ENCODE measurements at regions of chr18 and their contacts with region 1.

Region 1: DNA sequence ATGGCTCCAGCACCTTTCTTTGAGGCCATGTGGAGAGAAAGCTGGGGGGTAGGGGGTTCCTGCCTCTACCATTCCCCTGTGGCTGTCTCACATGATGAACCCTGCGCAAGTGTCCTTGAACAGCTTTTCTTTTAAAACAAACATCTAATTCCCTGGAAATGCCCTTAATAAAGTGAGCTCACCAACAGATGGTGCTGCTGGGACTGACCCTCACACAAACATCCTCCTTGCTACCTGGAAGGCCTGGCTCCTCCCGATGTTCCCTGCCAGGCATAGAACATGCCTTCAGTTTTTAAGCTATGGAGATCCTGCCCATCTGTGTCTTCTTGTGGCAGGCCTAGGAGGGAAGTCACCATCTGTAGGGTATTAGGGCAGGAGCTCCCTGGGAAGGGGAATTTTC is 60.7 kb upstream of the GATA6 start:
- DNase-seq: no peak
- H3K4me3 ChIP-seq: no peak overlapping the region
- H3K27ac ChIP-seq: no peak overlapping the region
- H3K4me1 ChIP-seq: peaks cover 3 to 23% (median 7%) of the 10 kb centered on the region in 4 donors
- H3K27me3 ChIP-seq: no peaks in the 10 kb centered on the region
- CTCF ChIP-seq: no peak
- EP300 ChIP-seq: no peak
- POLR2A ChIP-seq: no peak

Region 2: DNA sequence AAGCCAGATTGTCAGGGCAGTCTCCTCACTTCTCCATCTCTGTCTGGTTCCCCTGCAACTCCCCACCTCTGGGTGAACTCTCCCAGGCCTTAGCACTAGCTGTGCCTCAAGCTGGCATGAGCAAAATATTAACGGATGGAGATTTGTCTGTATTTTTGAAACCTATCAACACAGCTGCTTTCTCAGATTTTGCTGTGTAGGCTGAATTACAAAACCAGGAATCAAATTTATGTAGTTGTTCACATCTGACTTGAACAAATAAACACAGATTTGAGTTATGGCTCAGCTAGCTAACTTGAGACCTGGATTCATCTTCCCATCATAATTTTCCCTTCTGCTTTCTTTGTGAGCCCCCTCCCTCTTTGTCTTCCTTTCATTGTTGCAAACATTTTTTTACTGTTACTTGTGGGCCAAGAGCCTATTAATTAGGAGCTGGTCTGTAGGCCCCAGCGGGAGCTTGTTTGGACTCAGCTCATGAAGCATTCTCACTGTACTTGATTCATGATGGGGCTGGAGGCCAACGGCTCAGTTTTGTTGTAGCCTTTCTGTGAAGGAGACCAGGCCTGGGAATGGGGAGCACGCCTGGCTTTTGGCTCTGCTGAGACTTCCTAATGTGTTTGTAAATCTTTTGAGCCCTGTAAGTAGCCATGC is 103.4 kb before region 1 on chr18:
- in situ Hi-C with region 1: loop called in 1 of 4 experiments (anchors 25 kb)
- intact Hi-C with region 1: no loop called
- DNase-seq: no peak
- H3K4me3 ChIP-seq: no peak overlapping the region
- H3K27ac ChIP-seq: no peak overlapping the region
- H3K4me1 ChIP-seq: no peaks in the 10 kb centered on the region
- H3K27me3 ChIP-seq: no peaks in the 10 kb centered on the region
- CTCF ChIP-seq: no peak
- EP300 ChIP-seq: no peak
- POLR2A ChIP-seq: no peak